Activated CD4-positive, alpha-beta T cell treated with anti-CD3 and anti-CD28 coated beads for 36 hours (primary cell): ENCODE measurements at regions of chr17 and their contacts with region 1.

Region 1: DNA sequence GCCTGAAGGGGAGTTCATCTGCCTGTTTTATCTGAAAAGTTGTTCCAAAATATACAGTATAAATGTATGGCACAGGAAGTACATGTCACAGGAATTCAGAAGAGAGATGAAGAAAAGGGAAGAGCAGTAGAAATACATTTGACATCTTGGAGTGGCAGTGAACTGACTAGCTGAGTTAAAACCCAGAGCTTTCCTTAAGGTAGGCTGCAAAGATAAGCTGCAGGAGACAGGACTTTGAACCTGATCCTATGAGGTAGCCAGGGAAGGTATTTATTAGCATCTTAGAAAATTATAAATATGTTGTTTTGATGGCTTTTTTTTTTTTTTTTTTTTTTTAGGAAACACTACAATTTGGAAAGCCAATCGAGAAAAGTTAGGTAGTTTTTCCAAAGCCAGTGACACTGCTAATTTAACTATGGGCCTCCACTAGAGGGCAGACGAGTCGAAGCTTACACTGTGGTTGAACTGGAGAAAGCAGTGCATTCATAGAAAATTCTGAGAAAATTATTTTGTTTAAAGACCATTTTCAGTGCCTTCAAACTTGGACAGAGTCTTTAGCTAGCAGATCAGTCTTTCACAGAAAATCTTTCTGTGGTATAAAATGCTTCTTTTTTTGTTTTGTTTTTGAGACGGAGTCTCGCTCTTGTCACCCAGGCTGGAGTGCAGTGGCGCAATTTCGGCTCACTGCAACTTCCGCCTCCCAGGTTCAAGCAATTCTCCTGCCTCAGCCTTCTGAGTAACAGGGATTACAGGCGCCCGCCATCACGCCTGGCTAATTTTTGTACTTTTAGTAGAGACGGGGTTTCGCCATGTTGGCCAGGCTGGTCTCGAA is 122.3 kb downstream of the SSH2 start:
- DNase-seq: peak; percentile 83
- ATAC-seq: peak; percentile 74
- H3K4me3 Mint-ChIP-seq: no peak overlapping the region
- H3K27ac Mint-ChIP-seq: no peak overlapping the region
- H3K4me1 Mint-ChIP-seq: peaks cover 15% of the 10 kb centered on the region
- H3K27me3 Mint-ChIP-seq: no peaks in the 10 kb centered on the region

Region 2: DNA sequence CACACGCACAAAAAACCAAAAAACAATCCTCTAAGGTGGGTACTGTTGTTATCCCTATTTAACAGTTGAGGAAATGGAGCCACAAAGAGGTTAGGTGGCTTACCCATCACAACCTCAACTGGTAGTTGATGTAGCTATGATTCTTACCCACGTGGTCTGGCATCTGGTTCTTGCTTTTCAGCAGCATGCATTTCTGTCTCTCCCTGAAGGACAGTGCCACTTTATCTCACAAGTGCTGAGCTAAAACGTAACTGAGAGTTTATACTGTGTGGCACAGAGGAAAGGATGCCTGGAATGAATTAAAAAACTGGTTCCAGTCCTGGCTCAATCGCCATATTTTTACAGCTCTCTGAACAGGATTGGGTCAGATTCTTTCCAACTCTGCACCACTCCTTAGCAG is 183.2 kb before region 1 on chr17:
- CTCF ChIA-PET with region 1: no interaction called
- POLR2A ChIA-PET with region 1: no interaction called
- intact Hi-C with region 1: no loop called
- DNase-seq: peak; percentile 62
- ATAC-seq: peak; percentile 40
- H3K4me3 Mint-ChIP-seq: no peak overlapping the region
- H3K27ac Mint-ChIP-seq: peak overlapping the region; percentile 91
- H3K4me1 Mint-ChIP-seq: peaks cover 66% of the 10 kb centered on the region
- H3K27me3 Mint-ChIP-seq: no peaks in the 10 kb centered on the region

Region 3: GRCh38 chr17:29793519-29793918 is 14.2 kb before region 1 on chr17:
- CTCF ChIA-PET with region 1: interaction called, 10 read pairs
- POLR2A ChIA-PET with region 1: no interaction called
- intact Hi-C with region 1: no loop called
- DNase-seq: no peak
- ATAC-seq: no peak
- H3K4me3 Mint-ChIP-seq: no peak overlapping the region
- H3K27ac Mint-ChIP-seq: no peak overlapping the region
- H3K4me1 Mint-ChIP-seq: no peaks in the 10 kb centered on the region
- H3K27me3 Mint-ChIP-seq: no peaks in the 10 kb centered on the region

Region 4: GRCh38 chr17:29825604-29826003 is 17.9 kb after region 1 on chr17:
- CTCF ChIA-PET with region 1: interaction called, 14 read pairs
- POLR2A ChIA-PET with region 1: no interaction called
- intact Hi-C with region 1: no loop called
- DNase-seq: no peak
- ATAC-seq: no peak
- H3K4me3 Mint-ChIP-seq: no peak overlapping the region
- H3K27ac Mint-ChIP-seq: no peak overlapping the region
- H3K4me1 Mint-ChIP-seq: peaks cover 32% of the 10 kb centered on the region
- H3K27me3 Mint-ChIP-seq: no peaks in the 10 kb centered on the region

Region 5: DNA sequence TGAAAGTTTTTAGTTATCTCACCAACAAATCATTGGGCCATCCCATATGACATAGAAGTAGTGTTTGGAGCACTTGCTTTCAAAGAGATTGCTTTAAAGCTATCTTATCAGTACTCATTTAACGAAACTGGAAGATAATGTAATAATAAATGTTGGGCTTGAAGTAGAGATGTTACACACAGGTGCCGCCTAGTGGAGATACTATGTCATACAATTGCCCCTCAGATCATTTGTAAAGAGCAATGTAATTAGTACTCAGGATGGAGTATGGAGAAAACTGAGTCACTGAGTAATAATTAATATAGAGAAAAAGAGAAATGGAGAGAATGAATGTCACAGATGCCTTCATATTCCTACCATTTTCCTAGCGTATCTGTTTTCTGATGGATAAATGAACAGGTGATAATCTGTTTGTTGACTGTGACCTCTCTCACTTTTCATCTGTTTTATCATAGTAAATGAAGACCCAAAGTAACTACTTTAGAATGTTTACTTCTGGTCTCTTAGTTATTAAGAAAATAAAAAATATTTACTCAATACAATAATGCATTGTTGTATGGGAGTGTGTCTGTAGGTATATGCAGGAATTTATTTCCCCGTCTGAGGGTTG is 214.1 kb after region 1 on chr17:
- CTCF ChIA-PET with region 1: interaction called, 17 read pairs
- POLR2A ChIA-PET with region 1: no interaction called
- intact Hi-C with region 1: loop called (anchors 1 kb)
- DNase-seq: peak; percentile 47
- ATAC-seq: peak; percentile 64
- H3K4me3 Mint-ChIP-seq: no peak overlapping the region
- H3K27ac Mint-ChIP-seq: no peak overlapping the region
- H3K4me1 Mint-ChIP-seq: no peaks in the 10 kb centered on the region
- H3K27me3 Mint-ChIP-seq: peaks cover 2% of the 10 kb centered on the region

Region 6: DNA sequence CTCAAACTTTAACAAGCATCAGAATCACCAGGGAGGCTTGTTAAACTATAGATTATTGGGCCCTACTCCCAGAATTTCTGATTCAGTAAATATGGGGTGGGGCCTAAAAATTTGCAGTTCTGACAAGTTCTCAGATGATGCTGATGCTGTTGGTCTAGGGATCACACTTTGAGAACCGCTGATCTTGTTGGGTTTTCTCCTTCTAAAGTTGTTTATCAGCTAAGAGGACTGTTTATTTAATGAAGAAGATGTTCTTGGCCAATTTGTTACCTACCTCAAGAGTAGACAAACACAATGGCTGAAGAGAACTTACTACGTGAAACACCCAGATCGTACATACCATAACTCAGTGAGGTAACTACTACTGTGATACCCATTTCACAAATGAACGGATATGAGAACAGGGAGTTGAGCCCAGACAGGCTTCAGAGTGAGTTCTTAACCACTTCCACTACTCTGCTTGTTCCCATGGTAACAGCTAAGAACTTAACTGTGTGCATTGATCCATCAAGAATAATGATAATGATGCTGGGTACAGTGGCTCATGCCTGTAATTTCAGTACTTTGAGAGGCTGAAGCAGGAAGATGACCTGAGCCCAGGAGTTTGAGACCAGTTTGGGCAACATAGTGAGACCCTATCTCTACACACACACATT is 223.6 kb after region 1 on chr17:
- CTCF ChIA-PET with region 1: interaction called, 17 read pairs
- POLR2A ChIA-PET with region 1: no interaction called
- intact Hi-C with region 1: no loop called
- DNase-seq: no peak
- ATAC-seq: peak; percentile 64
- H3K4me3 Mint-ChIP-seq: no peak overlapping the region
- H3K27ac Mint-ChIP-seq: no peak overlapping the region
- H3K4me1 Mint-ChIP-seq: no peaks in the 10 kb centered on the region
- H3K27me3 Mint-ChIP-seq: no peaks in the 10 kb centered on the region